Ovary (tissue), 10 donors: ENCODE measurements at regions of chr15 and their contacts with region 1.

Region 1: GRCh38 chr15:73633111-73633990 is at the start of gene NPTN:
- DNase-seq: peak; percentile 98 to 99 (median 99)
- H3K4me3 ChIP-seq: peak within 1 kb of the TSS; percentile 91
- H3K27ac ChIP-seq: peak within 1 kb of the TSS; percentile 77 to 80
- H3K4me1 ChIP-seq: peaks cover 6% of the 10 kb centered on the region
- H3K27me3 ChIP-seq: no peaks in the 10 kb centered on the region
- CTCF ChIP-seq: no peak
- EP300 ChIP-seq: no peak
- POLR2A ChIP-seq: peak; percentile 26
- total RNA-seq, gene NPTN: 39.2 to 97.7 (median 80.6) TPM

Region 2: GRCh38 chr15:72272213-72273002 is 1360.9 kb before region 1 on chr15 and contains the start of gene PARP6:
- intact Hi-C with region 1: loop called in 1 of 4 experiments (anchors 5 kb)
- DNase-seq: peak; percentile 98 to 99 (median 99)
- H3K4me3 ChIP-seq: peak within 1 kb of the TSS; percentile 76
- H3K27ac ChIP-seq: peak within 1 kb of the TSS; percentile 92 to 96
- H3K4me1 ChIP-seq: peaks cover 6% of the 10 kb centered on the region
- H3K27me3 ChIP-seq: no peaks in the 10 kb centered on the region
- CTCF ChIP-seq: peak; percentile 61 to 82 (median 78)
- EP300 ChIP-seq: no peak
- POLR2A ChIP-seq: no peak
- total RNA-seq, gene PARP6: 44.5 to 97.4 (median 70.0) TPM

Region 3: GRCh38 chr15:73550190-73550589 is 83.2 kb before region 1 on chr15:
- intact Hi-C with region 1: loop called in 2 of 4 experiments (anchors 5 to 10 kb)
- DNase-seq: no peak
- H3K4me3 ChIP-seq: no peak overlapping the region
- H3K27ac ChIP-seq: no peak overlapping the region
- H3K4me1 ChIP-seq: no peaks in the 10 kb centered on the region
- H3K27me3 ChIP-seq: no peaks in the 10 kb centered on the region
- CTCF ChIP-seq: no peak
- EP300 ChIP-seq: no peak
- POLR2A ChIP-seq: no peak

Region 4: GRCh38 chr15:73569370-73569769 is 64.0 kb before region 1 on chr15:
- intact Hi-C with region 1: loop called in 3 of 4 experiments (anchors 5 to 10 kb)
- DNase-seq: no peak
- H3K4me3 ChIP-seq: no peak overlapping the region
- H3K27ac ChIP-seq: no peak overlapping the region
- H3K4me1 ChIP-seq: no peaks in the 10 kb centered on the region
- H3K27me3 ChIP-seq: no peaks in the 10 kb centered on the region
- CTCF ChIP-seq: no peak
- EP300 ChIP-seq: no peak
- POLR2A ChIP-seq: no peak

Region 5: DNA sequence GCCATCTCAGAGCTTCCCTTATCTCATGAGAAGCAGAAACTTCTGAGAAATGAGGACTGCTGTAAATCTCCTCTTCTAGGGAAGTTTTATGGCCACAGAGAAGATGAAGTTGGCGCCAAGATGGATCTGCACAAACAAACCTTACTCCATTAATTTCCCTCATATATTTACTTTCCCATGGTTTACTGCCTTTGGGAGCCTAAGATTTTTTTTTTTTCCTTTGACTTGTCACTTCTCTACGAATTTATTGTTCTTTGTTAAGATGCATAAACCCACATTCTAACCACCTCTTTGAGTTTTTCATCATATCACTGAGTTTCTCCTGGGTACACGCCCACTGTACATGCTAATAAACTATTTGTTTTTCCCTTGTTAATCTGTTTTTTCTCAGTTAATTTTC is 21.3 kb after region 1 on chr15:
- intact Hi-C with region 1: no loop called
- DNase-seq: no peak
- H3K4me3 ChIP-seq: no peak overlapping the region
- H3K27ac ChIP-seq: no peak overlapping the region
- H3K4me1 ChIP-seq: no peaks in the 10 kb centered on the region
- H3K27me3 ChIP-seq: no peaks in the 10 kb centered on the region
- CTCF ChIP-seq: no peak
- EP300 ChIP-seq: no peak
- POLR2A ChIP-seq: no peak

Region 6: DNA sequence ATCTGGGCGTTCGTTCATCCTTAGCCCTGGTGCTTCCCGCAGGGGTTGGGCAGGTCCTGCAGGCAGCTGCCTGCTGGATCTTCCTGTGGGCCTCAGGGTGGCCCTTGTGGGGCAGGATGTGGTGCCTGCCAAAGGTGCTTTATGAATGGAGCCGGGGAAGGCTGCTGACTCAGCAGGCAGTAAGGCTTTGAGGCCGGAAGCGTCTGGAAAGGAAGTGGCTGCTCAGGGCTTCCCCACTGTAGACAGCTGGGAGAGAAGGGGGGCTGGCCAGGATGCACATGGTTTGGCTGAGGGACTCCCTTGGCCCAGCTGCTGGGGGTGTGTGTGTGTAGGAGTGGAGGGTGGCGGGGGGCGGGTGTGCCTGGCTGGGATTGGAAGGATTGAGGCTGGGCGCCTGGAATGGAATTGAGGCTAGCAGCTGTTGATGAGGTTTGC is 63.7 kb after region 1 on chr15:
- intact Hi-C with region 1: loop called in 1 of 4 experiments (anchors 5 kb)
- DNase-seq: peak; percentile 87 to 93 (median 91)
- H3K4me3 ChIP-seq: no peak overlapping the region
- H3K27ac ChIP-seq: peak overlapping the region in 1 of 2 donors; percentile 16
- H3K4me1 ChIP-seq: peaks cover 4% of the 10 kb centered on the region
- H3K27me3 ChIP-seq: no peaks in the 10 kb centered on the region
- CTCF ChIP-seq: no peak
- EP300 ChIP-seq: no peak
- POLR2A ChIP-seq: no peak